Activated CD4-positive, alpha-beta T cell treated with anti-CD3 and anti-CD28 coated beads for 36 hours (primary cell): ENCODE measurements at regions of chr9 and their contacts with region 1.

Region 1: GRCh38 chr9:83688921-83689320 is 18.8 kb downstream of the UBQLN1 start:
- DNase-seq: no peak
- ATAC-seq: peak; percentile 89
- H3K4me3 Mint-ChIP-seq: no peak overlapping the region
- H3K27ac Mint-ChIP-seq: peak overlapping the region; percentile 61
- H3K4me1 Mint-ChIP-seq: peaks cover 71% of the 10 kb centered on the region
- H3K27me3 Mint-ChIP-seq: no peaks in the 10 kb centered on the region

Region 2: GRCh38 chr9:81814401-81815166 is 1874.3 kb before region 1 on chr9:
- CTCF ChIA-PET with region 1: no interaction called
- POLR2A ChIA-PET with region 1: no interaction called
- intact Hi-C with region 1: no loop called
- DNase-seq: no peak
- ATAC-seq: no peak
- H3K4me3 Mint-ChIP-seq: no peak overlapping the region
- H3K27ac Mint-ChIP-seq: no peak overlapping the region
- H3K4me1 Mint-ChIP-seq: peaks cover 16% of the 10 kb centered on the region
- H3K27me3 Mint-ChIP-seq: no peaks in the 10 kb centered on the region

Region 3: DNA sequence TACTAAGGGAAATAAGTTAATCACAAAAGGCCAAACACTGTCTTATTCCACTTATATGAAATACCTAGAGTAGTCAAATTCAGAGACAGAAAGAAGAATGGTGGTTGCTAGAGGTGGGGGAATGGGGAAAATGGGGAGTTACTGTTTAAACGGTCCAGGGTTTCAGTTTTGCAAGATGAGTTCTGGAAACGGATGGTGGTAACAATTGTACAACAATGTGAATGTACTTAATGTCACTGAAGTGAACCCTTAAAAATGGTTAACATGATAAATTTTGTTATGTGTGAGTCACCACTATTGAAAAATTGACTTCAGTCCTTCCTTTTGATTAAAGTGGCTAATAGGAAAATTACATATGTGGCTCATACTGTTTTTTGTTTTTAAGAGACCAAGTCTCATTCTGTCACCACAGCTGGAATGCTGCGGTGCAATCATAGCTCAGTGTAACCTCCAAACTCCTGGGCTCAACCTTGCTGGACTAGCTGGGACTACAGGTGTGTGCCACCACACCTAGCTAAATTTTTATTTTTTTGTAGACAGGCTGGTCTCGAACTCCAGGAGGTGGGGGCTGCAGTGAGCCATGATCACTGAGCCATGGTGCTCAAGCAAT is 10.2 kb after region 1 on chr9:
- CTCF ChIA-PET with region 1: interaction called, 3 read pairs
- POLR2A ChIA-PET with region 1: interaction called, 10 read pairs
- intact Hi-C with region 1: no loop called
- DNase-seq: peak; percentile 11
- ATAC-seq: peak; percentile 75
- H3K4me3 Mint-ChIP-seq: no peak overlapping the region
- H3K27ac Mint-ChIP-seq: peak overlapping the region; percentile 29
- H3K4me1 Mint-ChIP-seq: peaks cover 68% of the 10 kb centered on the region
- H3K27me3 Mint-ChIP-seq: no peaks in the 10 kb centered on the region

Region 4: GRCh38 chr9:83765376-83765775 is 76.5 kb after region 1 on chr9:
- CTCF ChIA-PET with region 1: no interaction called
- POLR2A ChIA-PET with region 1: no interaction called
- intact Hi-C with region 1: no loop called
- DNase-seq: no peak
- ATAC-seq: no peak
- H3K4me3 Mint-ChIP-seq: no peak overlapping the region
- H3K27ac Mint-ChIP-seq: no peak overlapping the region
- H3K4me1 Mint-ChIP-seq: no peaks in the 10 kb centered on the region
- H3K27me3 Mint-ChIP-seq: no peaks in the 10 kb centered on the region